ENCODE measurements at regions of chr11 and their contacts with region 1.

Region 1: GRCh38 chr11:16613512-16614381 is 124.7 kb upstream of the C11orf58 start:
- DNase-seq: no peak
- ATAC-seq: peak; percentile 100
- H3K4me3 ChIP-seq: no peak overlapping the region
- H3K27ac ChIP-seq: no peak overlapping the region
- H3K4me1 ChIP-seq: no peaks in the 10 kb centered on the region
- H3K27me3 ChIP-seq: peaks cover 2 to 21% of the 10 kb centered on the region in 2 experiments
- CTCF ChIP-seq: peak; percentile 84 to 86 (median 84)
- EP300 ChIP-seq: no peak
- POLR2A ChIP-seq: no peak
- RAD21 ChIP-seq: peak; percentile 72

Region 2: GRCh38 chr11:15327786-15328231 is 1285.9 kb before region 1 on chr11:
- CTCF ChIA-PET with region 1: interaction called, 3 read pairs
- POLR2A ChIA-PET with region 1: no interaction called
- RAD21 ChIA-PET with region 1: interaction called, 4 read pairs
- SMC1A ChIA-PET with region 1: no interaction called
- in situ Hi-C with region 1: no loop called
- intact Hi-C with region 1: loop called (anchors 5 kb)
- DNase-seq: no peak
- ATAC-seq: peak; percentile 71
- H3K4me3 ChIP-seq: no peak overlapping the region
- H3K27ac ChIP-seq: no peak overlapping the region
- H3K4me1 ChIP-seq: no peaks in the 10 kb centered on the region
- H3K27me3 ChIP-seq: peaks cover 0 to 2% of the 10 kb centered on the region in 2 experiments; a peak in 1 of 4 replicates
- CTCF ChIP-seq: peak; percentile 55 to 72 (median 69)
- EP300 ChIP-seq: no peak
- POLR2A ChIP-seq: no peak
- RAD21 ChIP-seq: peak; percentile 76

Region 3: GRCh38 chr11:15650105-15650938 is 963.4 kb before region 1 on chr11:
- CTCF ChIA-PET with region 1: interaction called, 5 read pairs
- POLR2A ChIA-PET with region 1: no interaction called
- RAD21 ChIA-PET with region 1: interaction called, 5 read pairs
- SMC1A ChIA-PET with region 1: no interaction called
- in situ Hi-C with region 1: no loop called
- intact Hi-C with region 1: loop called (anchors 2 kb)
- DNase-seq: peak; percentile 12
- ATAC-seq: peak; percentile 98
- H3K4me3 ChIP-seq: no peak overlapping the region
- H3K27ac ChIP-seq: no peak overlapping the region
- H3K4me1 ChIP-seq: no peaks in the 10 kb centered on the region; the same call in 1 of the 2 replicates
- H3K27me3 ChIP-seq: peaks cover 3 to 4% of the 10 kb centered on the region in 2 experiments; a peak in 2 of 4 replicates
- CTCF ChIP-seq: peak; percentile 92 to 98 (median 94)
- EP300 ChIP-seq: peak; percentile 9 to 32; a peak in 1 of 4 replicates
- POLR2A ChIP-seq: no peak
- RAD21 ChIP-seq: peak; percentile 75

Region 4: GRCh38 chr11:15819679-15820286 is 794.0 kb before region 1 on chr11:
- CTCF ChIA-PET with region 1: interaction called, 9 read pairs
- POLR2A ChIA-PET with region 1: no interaction called
- RAD21 ChIA-PET with region 1: interaction called, 7 read pairs
- SMC1A ChIA-PET with region 1: interaction called, 3 read pairs
- in situ Hi-C with region 1: no loop called
- intact Hi-C with region 1: loop called (anchors 2 kb)
- DNase-seq: no peak
- ATAC-seq: peak; percentile 88
- H3K4me3 ChIP-seq: no peak overlapping the region
- H3K27ac ChIP-seq: no peak overlapping the region
- H3K4me1 ChIP-seq: no peaks in the 10 kb centered on the region
- H3K27me3 ChIP-seq: no peaks in the 10 kb centered on the region
- CTCF ChIP-seq: peak; percentile 72 to 91 (median 91)
- EP300 ChIP-seq: no peak
- POLR2A ChIP-seq: no peak
- RAD21 ChIP-seq: peak; percentile 60

Region 5: DNA sequence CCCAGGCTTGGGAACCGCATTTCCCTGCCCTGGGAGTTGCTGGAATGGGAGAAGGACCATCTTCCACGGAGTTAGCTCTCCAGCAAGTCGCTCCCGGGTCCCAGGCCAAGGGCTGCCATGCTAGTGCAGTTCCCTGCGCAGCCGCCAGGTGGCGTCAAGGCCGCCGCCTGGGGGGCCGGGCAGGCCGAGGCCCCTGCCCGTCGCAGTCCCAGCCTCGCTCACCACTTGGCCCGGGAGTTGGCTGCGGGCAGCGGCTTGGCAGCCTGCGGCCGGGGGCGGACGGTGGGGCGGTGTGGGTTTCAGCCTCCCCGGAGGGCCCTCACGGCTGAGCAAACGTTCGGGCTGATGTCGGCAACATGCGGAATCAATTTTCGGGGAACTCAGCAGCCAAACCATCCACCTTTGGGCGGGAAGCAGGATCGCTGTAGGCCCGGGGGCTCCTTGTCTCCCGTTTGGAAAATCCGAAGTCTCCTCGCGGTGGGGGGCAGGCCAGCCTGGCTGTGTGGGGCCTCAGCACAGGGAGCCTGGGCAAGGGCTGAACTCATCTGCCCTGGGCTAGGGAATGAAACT is 672.5 kb before region 1 on chr11:
- CTCF ChIA-PET with region 1: interaction called, 4 read pairs
- POLR2A ChIA-PET with region 1: no interaction called
- RAD21 ChIA-PET with region 1: interaction called, 3 read pairs
- SMC1A ChIA-PET with region 1: interaction called, 4 read pairs
- in situ Hi-C with region 1: no loop called
- intact Hi-C with region 1: loop called (anchors 1 kb)
- DNase-seq: no peak
- ATAC-seq: peak; percentile 90
- H3K4me3 ChIP-seq: no peak overlapping the region
- H3K27ac ChIP-seq: no peak overlapping the region
- H3K4me1 ChIP-seq: no peaks in the 10 kb centered on the region
- H3K27me3 ChIP-seq: no peaks in the 10 kb centered on the region
- CTCF ChIP-seq: peak; percentile 71 to 94 (median 88)
- EP300 ChIP-seq: no peak
- POLR2A ChIP-seq: no peak
- RAD21 ChIP-seq: peak; percentile 73

Region 6: DNA sequence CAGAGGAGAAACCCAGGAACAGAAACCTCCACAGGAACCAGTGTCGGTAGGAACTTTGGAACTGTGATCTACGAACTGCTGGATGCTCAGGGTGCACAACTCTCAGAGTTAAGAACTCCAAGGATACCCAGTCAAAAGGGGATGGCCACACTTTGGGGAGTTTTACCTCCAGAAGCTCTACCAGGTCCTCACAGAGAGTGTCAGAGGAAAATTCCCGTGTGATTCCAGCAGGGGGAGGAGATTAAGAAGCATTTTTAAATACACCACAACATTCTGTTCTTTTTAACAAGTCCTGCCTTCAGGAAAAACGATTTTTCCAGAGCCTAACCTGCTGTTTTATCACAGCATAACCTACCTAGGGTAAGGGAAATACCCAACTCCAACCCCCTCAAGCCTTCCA is 361.4 kb before region 1 on chr11:
- CTCF ChIA-PET with region 1: no interaction called
- POLR2A ChIA-PET with region 1: no interaction called
- RAD21 ChIA-PET with region 1: no interaction called
- SMC1A ChIA-PET with region 1: no interaction called
- in situ Hi-C with region 1: no loop called
- intact Hi-C with region 1: no loop called
- DNase-seq: no peak
- ATAC-seq: no peak
- H3K4me3 ChIP-seq: no peak overlapping the region
- H3K27ac ChIP-seq: no peak overlapping the region
- H3K4me1 ChIP-seq: no peaks in the 10 kb centered on the region
- H3K27me3 ChIP-seq: no peaks in the 10 kb centered on the region
- CTCF ChIP-seq: no peak
- EP300 ChIP-seq: no peak
- POLR2A ChIP-seq: no peak
- RAD21 ChIP-seq: no peak

Region 7: GRCh38 chr11:16561150-16561549 is 52.6 kb before region 1 on chr11:
- CTCF ChIA-PET with region 1: no interaction called
- POLR2A ChIA-PET with region 1: no interaction called
- RAD21 ChIA-PET with region 1: no interaction called
- SMC1A ChIA-PET with region 1: no interaction called
- in situ Hi-C with region 1: no loop called
- intact Hi-C with region 1: no loop called
- DNase-seq: no peak
- ATAC-seq: no peak
- H3K4me3 ChIP-seq: no peak overlapping the region
- H3K27ac ChIP-seq: no peak overlapping the region
- H3K4me1 ChIP-seq: no peaks in the 10 kb centered on the region
- H3K27me3 ChIP-seq: no peaks in the 10 kb centered on the region
- CTCF ChIP-seq: no peak
- EP300 ChIP-seq: no peak
- POLR2A ChIP-seq: no peak
- RAD21 ChIP-seq: no peak

Region 8: DNA sequence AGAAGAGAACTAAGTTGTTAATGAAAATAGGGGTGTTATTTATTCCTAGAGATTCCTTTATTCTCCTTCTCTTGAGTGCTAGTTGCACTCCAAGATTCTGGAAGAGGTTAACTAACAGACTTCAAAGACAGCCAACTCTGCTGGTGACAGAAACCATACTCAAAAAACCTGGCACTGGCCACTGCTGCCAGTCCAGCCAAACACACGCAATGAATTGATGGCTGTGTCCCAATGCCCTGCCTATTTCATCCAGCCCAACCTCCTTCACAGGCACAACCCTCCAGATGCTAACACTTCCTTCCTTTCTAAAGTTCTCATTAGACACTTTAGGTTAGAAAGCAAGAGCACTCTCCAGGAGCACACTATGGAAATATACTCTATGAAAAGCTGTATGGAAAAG is 26.1 kb before region 1 on chr11:
- CTCF ChIA-PET with region 1: interaction called, 10 read pairs
- POLR2A ChIA-PET with region 1: no interaction called
- RAD21 ChIA-PET with region 1: no interaction called
- SMC1A ChIA-PET with region 1: no interaction called
- in situ Hi-C with region 1: no loop called
- intact Hi-C with region 1: no loop called
- DNase-seq: no peak
- ATAC-seq: no peak
- H3K4me3 ChIP-seq: no peak overlapping the region
- H3K27ac ChIP-seq: no peak overlapping the region
- H3K4me1 ChIP-seq: no peaks in the 10 kb centered on the region
- H3K27me3 ChIP-seq: no peaks in the 10 kb centered on the region; a peak in 1 of 4 replicates
- CTCF ChIP-seq: no peak
- EP300 ChIP-seq: no peak
- POLR2A ChIP-seq: no peak
- RAD21 ChIP-seq: no peak

Region 9: GRCh38 chr11:16603245-16603644 is 10.5 kb before region 1 on chr11:
- CTCF ChIA-PET with region 1: no interaction called
- POLR2A ChIA-PET with region 1: no interaction called
- RAD21 ChIA-PET with region 1: no interaction called
- SMC1A ChIA-PET with region 1: no interaction called
- in situ Hi-C with region 1: no loop called
- intact Hi-C with region 1: no loop called
- DNase-seq: no peak
- ATAC-seq: no peak
- H3K4me3 ChIP-seq: no peak overlapping the region
- H3K27ac ChIP-seq: no peak overlapping the region
- H3K4me1 ChIP-seq: no peaks in the 10 kb centered on the region
- H3K27me3 ChIP-seq: peaks cover 20 to 42% of the 10 kb centered on the region in 2 experiments
- CTCF ChIP-seq: no peak
- EP300 ChIP-seq: no peak
- POLR2A ChIP-seq: no peak
- RAD21 ChIP-seq: no peak

Region 10: DNA sequence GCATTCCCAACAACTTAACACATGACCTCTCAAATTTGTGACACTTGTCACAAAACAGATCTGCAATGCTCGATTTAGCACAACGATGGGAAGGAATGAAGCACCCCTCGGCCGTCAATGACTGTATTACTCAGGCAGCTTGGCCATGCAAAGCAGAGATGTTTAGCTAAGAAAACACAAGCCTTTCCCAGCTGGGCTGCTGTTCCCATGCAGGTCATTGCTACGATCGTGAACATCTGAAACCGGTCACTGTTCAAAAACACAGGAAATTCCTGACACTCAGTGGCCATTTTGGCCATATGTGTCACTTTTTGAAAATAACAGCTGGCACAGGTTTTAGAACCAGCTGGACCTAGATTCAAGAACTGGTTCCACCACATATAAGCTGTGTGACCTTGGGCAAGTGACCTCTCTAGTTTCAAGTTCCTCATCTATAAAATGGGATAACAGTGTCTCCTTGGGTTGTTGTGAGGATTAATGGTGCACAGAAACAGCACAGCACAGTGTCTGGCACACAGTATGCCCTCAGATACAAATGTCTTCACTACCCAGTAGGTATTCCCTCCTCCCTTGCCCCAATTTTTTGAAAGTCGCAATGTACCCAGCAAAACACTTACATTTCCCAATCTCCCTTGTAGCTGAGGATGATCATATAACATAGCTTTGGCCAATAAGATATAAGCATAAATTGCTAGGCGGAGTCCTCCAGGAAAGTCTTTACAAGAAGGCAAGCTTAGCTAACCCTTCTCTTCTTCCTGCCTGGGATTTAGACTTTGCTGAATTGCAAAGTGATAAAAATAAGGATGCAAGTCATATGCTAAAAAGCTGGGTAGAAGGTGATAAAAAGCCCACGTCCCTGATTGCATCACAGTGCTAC is 217.8 kb after region 1 on chr11:
- CTCF ChIA-PET with region 1: no interaction called
- POLR2A ChIA-PET with region 1: no interaction called
- RAD21 ChIA-PET with region 1: no interaction called
- SMC1A ChIA-PET with region 1: no interaction called
- in situ Hi-C with region 1: no loop called
- intact Hi-C with region 1: no loop called
- DNase-seq: no peak
- ATAC-seq: no peak
- H3K4me3 ChIP-seq: no peak overlapping the region
- H3K27ac ChIP-seq: no peak overlapping the region
- H3K4me1 ChIP-seq: no peaks in the 10 kb centered on the region
- H3K27me3 ChIP-seq: no peaks in the 10 kb centered on the region
- CTCF ChIP-seq: no peak
- EP300 ChIP-seq: no peak
- POLR2A ChIP-seq: no peak
- RAD21 ChIP-seq: no peak

Measured in GM12878 (cell line).